ENCODE measurements at regions of chr20 and their contacts with region 1.

Region 1: GRCh38 chr20:58623826-58624473 is 27.1 kb upstream of the STX16 start:
- DNase-seq: peak; percentile 56 to 83 (median 63)
- ATAC-seq: peak; percentile 63 to 91 (median 84)
- H3K4me3 ChIP-seq: no peak overlapping the region
- H3K27ac ChIP-seq: no peak overlapping the region
- H3K4me1 ChIP-seq: peaks cover 0 to 8% (median 0%) of the 10 kb centered on the region in 12 donors
- H3K27me3 ChIP-seq: peaks cover 0 to 8% (median 0%) of the 10 kb centered on the region in 9 donors
- CTCF ChIP-seq: no peak
- POLR2A ChIP-seq: no peak

Region 2: DNA sequence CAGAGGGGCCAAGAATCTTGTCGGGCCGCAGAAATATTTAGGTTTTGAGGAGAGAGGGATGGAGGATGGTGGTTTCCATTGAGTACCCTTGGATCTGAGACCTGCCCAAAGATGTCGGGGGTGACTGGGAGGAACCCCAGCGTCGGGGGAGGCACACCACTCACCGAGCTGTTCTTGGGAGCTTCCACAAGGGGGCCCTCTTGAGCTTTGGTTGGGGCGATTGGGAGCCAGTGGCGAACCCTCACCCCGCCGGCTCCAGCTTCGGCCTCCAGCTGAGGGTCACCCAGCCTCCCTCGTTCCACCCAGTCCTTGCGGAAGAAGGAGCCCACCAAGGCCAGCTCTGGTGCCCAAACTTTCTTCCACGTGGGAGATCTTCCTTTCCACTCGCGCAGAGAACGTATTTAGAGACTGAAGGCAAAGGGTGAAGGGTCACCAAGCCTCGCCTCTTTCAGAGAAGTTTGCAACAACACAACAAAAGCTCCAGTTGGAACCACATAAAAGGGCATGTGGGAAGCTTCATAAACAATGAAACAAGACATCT is 142.4 kb before region 1 on chr20:
- intact Hi-C with region 1: loop called in 1 of 10 experiments (anchors 10 kb)
- DNase-seq: no peak
- ATAC-seq: peak in 3 of 4 donors; percentile 46 to 63 (median 46)
- H3K4me3 ChIP-seq: no peak overlapping the region
- H3K27ac ChIP-seq: peak overlapping the region in 5 of 12 donors; percentile 21 to 77 (median 65)
- H3K4me1 ChIP-seq: peaks cover 0 to 10% (median 0%) of the 10 kb centered on the region in 12 donors
- H3K27me3 ChIP-seq: no peaks in the 10 kb centered on the region
- CTCF ChIP-seq: peak; percentile 14 to 50 (median 34)
- POLR2A ChIP-seq: no peak

Region 3: GRCh38 chr20:58650776-58651558 is 27.0 kb after region 1 on chr20 and contains the start of gene STX16:
- intact Hi-C with region 1: no loop called
- DNase-seq: peak; percentile 90 to 95 (median 94)
- ATAC-seq: peak; percentile 95 to 98 (median 97)
- H3K4me3 ChIP-seq: peak within 1 kb of the TSS; percentile 78 to 99 (median 97)
- H3K27ac ChIP-seq: peak within 1 kb of the TSS; percentile 87 to 98 (median 96)
- H3K4me1 ChIP-seq: peaks cover 3 to 49% (median 35%) of the 10 kb centered on the region in 12 donors
- H3K27me3 ChIP-seq: no peaks in the 10 kb centered on the region
- CTCF ChIP-seq: peak; percentile 36 to 88 (median 62)
- POLR2A ChIP-seq: peak in 1 of 2 donors; percentile 65
- total RNA-seq, gene STX16: 14.6 to 38.9 (median 25.6) TPM

Measured in heart left ventricle (tissue), 16 donors.